Posterior cingulate gyrus (tissue), 11 donors: ENCODE measurements at regions of chr1 and their contacts with region 1.

Region 1: GRCh38 chr1:56578963-56579875 is at the start of gene PLPP3:
- DNase-seq: peak; percentile 64 to 96 (median 76)

Region 2: DNA sequence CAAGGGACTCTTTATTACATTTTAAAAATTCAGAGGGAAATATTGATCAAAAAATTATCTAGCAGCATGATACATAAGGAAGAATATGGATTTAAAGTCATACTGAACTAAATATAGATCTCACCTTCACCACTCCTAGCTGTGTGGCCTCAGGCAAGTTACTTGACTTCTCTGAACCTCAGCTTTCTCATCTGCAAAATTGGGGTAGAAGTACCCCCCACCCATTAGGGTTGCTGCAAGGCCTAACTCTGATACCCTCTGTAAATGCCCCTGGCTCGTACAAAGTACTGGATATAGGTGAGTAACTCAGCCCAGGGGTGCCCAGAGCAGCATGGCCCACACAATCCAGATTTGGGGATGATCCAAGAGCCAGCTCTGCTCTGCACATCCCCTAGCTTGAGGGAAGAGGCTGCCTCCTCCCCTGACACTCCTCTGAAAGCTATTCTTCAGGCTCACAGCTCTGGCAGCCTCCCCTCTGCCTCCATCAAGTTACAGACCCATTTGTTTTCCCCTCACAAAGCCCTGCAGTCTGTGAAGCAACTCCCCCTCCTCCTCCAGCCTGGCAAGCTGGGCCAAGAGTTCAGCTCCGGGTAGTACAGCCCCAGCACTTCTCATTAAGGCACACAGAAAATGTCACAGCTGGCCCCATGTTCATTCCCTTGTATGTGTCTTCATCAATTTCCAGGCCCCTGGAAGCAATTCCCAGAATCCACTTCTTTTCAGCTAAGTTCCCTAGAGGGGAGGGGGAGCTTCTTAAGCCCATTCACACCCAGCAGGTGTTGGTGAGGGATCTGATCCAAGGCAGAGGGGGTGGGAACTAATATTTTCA is 143.6 kb before region 1 on chr1:
- intact Hi-C with region 1: loop called (anchors 2 kb)
- DNase-seq: peak; percentile 73 to 98 (median 84)